ENCODE measurements at regions of chr19 and their contacts with region 1.

Region 1: DNA sequence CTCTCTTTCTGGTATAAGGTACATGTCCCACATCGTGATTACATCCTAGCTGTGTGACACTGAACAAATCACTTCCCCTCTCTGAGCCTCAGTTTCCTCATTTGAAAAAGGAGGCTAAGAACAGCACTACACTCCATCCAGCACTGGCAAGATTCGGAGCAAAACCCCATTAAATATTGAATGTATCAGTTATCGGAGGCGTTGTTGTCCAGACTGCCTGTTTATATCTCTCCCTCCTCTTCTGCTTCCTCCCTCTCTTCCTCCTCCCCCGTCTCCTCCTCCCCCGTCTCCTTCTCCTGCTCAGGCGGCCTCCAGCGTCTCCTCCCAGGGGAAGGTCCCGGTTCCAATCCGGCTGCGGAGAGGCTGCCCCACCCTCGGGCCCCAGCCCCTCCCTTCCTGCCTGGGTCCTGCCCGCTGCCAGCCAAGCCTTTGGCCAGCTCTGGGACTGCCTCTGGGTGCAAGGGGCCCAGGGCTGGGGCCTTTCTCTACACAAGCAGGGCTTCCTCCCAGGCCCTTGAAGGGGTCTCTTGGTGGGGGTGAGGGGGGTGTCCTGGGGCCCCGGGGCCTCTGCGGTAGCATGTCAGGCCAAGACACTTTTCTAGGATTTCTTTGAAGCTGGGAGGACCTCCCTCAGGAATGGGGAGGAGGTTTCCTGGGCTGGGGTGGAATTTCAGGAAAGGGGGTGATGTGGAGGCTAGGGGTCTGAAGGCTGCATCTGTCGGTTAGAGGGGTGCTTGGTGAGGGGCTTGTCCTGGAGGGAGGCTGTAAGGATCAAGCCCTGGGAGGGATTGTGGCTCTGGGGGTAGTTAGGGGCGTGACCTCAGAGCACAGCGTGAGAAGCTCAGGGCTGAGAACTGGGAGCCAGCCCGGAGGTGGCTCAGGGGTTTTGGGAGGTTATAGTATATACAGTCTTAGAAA is 1.9 kb downstream of the RRAS start:
- DNase-seq: peak; percentile 94 to 98
- H3K4me3 ChIP-seq: peak overlapping the region; percentile 92 to 99
- H3K27ac ChIP-seq: peak overlapping the region; percentile 93 to 97
- H3K4me1 ChIP-seq: peaks cover 0 to 44% (median 22%) of the 10 kb centered on the region in 4 donors
- H3K27me3 ChIP-seq: no peaks in the 10 kb centered on the region
- CTCF ChIP-seq: no peak

Region 2: DNA sequence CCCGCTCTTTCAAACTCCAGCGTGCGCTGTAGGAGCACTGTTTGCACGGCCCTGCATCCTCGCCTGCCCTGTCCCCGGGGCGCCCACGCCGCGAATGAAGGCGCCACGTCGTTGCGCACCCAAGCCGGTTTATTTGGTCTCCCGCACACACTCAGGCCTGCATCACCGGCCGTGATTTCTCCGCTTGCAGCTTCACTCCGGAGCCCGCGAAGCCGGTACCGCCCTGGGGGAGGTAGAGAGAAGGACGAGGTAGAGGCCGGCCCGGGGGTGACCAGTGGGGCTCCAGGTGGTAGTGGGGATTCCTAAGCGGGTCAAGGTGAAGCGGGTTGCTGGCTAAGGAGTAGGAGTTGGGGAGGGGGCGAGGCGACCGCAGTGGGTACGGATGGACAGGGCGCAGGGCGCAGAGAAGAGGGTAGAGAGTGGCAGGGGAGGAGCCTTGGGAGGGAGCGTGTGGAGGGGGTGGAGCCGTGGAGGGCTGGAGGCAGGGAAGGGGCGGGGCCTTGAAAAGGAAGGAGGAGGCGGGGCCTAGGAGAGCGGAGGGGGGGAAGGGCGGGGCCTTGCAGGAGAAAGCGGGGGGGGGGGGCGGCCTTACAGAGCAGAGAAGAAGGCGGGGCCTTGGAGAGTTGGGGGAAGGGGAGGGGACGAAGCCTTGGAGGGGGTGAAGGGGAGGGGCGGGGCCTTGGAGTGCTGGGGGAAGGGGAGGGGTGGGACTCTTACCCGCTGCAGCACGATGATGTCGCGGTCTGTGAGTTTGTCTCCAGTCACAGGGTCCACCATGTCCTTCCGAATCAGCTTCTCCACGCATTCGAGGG is 82.3 kb before region 1 on chr19:
- intact Hi-C with region 1: no loop called
- DNase-seq: peak; percentile 53 to 69
- H3K4me3 ChIP-seq: no peak overlapping the region
- H3K27ac ChIP-seq: no peak overlapping the region
- H3K4me1 ChIP-seq: no peaks in the 10 kb centered on the region
- H3K27me3 ChIP-seq: no peaks in the 10 kb centered on the region
- CTCF ChIP-seq: no peak

Region 3: GRCh38 chr19:49590071-49590970 is 47.8 kb before region 1 on chr19:
- intact Hi-C with region 1: loop called (anchors 2 kb)
- DNase-seq: peak; percentile 94 to 96
- H3K4me3 ChIP-seq: peak overlapping the region; percentile 87 to 96
- H3K27ac ChIP-seq: peak overlapping the region; percentile 86 to 92
- H3K4me1 ChIP-seq: peaks cover 0 to 34% (median 15%) of the 10 kb centered on the region in 4 donors
- H3K27me3 ChIP-seq: no peaks in the 10 kb centered on the region
- CTCF ChIP-seq: no peak